ENCODE measurements at regions of chr1 and their contacts with region 1.

Region 1: DNA sequence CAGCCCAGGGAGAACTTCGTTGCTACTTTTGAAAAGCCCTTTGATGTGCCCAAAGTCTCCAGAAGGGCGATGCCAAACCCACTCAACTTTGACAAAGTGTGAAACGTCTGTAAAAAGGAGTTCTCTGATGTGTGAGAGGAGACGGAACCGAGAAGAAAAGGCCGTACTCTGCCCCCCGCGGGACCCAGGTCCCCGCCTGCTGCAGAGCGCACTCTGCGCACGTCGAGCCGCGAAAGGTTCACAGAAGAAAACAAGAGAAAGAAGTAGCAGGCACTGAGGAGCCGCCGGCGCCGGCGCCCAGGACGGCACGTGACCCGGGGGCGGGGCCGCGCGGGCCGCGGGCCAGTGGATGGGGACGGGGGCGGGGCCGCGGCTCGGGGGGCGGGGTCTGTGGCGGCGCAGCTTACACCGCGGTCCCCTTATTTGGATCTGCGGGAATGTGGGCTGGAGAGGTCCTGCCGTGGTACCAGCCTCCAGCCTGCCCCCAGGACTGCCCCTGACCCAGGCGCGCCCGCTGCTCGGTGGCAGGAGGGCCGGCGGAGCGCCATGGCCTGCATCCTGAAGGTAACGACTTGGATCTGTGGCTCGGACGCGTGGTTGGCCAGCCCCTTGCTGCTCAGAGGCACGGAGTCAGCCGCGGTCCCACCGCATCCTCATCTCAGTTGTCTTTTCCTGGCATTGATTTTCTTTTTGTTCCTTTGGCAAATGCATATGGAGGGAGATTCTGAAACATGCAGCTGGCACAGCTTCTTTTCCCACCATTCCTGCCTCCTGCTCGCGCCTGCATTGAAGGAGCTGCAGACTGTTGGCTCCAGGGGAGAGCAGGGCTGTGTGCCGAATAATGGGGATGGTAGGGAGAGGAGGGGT is at the start of gene ST6GALNAC3:
- DNase-seq: peak; percentile 79
- H3K4me3 ChIP-seq: peak within 1 kb of the TSS; percentile 88 to 98 (median 98)
- H3K27ac ChIP-seq: peak within 1 kb of the TSS; percentile 75
- H3K4me1 ChIP-seq: peaks cover 28% of the 10 kb centered on the region
- H3K27me3 ChIP-seq: no peaks in the 10 kb centered on the region
- CTCF ChIP-seq: no peak
- POLR2A ChIP-seq: peak; percentile 84
- total RNA-seq, gene ST6GALNAC3: 44.0 and 48.3 TPM in 2 replicates

Region 2: GRCh38 chr1:75991497-75992114 is 82.9 kb before region 1 on chr1:
- CTCF ChIA-PET with region 1: no interaction called
- POLR2A ChIA-PET with region 1: no interaction called
- dilution Hi-C with region 1: no loop called
- intact Hi-C with region 1: loop called (anchors 2 kb)
- DNase-seq: peak; percentile 81
- H3K4me3 ChIP-seq: no peak overlapping the region
- H3K27ac ChIP-seq: no peak overlapping the region
- H3K4me1 ChIP-seq: no peaks in the 10 kb centered on the region
- H3K27me3 ChIP-seq: peaks cover 2 to 3% of the 10 kb centered on the region in 2 experiments
- CTCF ChIP-seq: peak; percentile 71 to 78
- POLR2A ChIP-seq: no peak

Region 3: GRCh38 chr1:76035053-76035452 is 39.5 kb before region 1 on chr1:
- CTCF ChIA-PET with region 1: interaction called, 10 read pairs
- POLR2A ChIA-PET with region 1: no interaction called
- dilution Hi-C with region 1: no loop called
- intact Hi-C with region 1: no loop called
- DNase-seq: peak; percentile 26
- H3K4me3 ChIP-seq: no peak overlapping the region
- H3K27ac ChIP-seq: no peak overlapping the region
- H3K4me1 ChIP-seq: no peaks in the 10 kb centered on the region
- H3K27me3 ChIP-seq: peaks cover 0 to 4% of the 10 kb centered on the region in 2 experiments
- CTCF ChIP-seq: peak; percentile 23 to 25
- POLR2A ChIP-seq: no peak

Region 4: DNA sequence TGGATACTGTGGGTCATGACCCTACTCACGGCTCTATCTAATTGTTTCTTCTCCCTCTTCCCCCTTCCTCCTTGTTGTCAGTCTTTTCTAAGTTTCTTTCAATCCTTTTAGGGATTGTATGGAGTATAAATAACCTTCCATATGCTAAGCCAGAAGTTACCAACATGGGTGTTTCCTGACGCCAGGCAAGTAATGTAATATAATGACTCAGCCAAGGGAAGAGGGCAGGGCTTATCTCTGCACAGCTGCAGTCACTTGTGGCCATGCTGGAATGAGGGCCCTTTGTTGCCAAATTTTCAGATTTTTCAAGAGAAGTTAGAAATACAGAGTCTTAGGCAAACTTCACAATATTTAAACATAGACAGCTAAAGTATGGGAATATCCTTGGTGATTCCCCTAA is 194.6 kb after region 1 on chr1:
- CTCF ChIA-PET with region 1: no interaction called
- POLR2A ChIA-PET with region 1: no interaction called
- dilution Hi-C with region 1: no loop called
- intact Hi-C with region 1: loop called (anchors 10 kb)
- DNase-seq: peak; percentile 85
- H3K4me3 ChIP-seq: no peak overlapping the region
- H3K27ac ChIP-seq: peak overlapping the region; percentile 30
- H3K4me1 ChIP-seq: peaks cover 12% of the 10 kb centered on the region
- H3K27me3 ChIP-seq: no peaks in the 10 kb centered on the region
- CTCF ChIP-seq: no peak
- POLR2A ChIP-seq: no peak